Mammary epithelial cell (primary cell): ENCODE measurements at regions of chr14 and their contacts with region 1.

Region 1: GRCh38 chr14:49550286-49551184 is 35.6 kb downstream of the RPS29 start:
- DNase-seq: peak; percentile 21
- H3K4me3 ChIP-seq: no peak overlapping the region
- H3K27ac ChIP-seq: no peak overlapping the region
- H3K4me1 ChIP-seq: peaks cover 8% of the 10 kb centered on the region
- H3K27me3 ChIP-seq: no peaks in the 10 kb centered on the region
- CTCF ChIP-seq: peak; percentile 57 to 59

Region 2: GRCh38 chr14:49306152-49306751 is 244.3 kb before region 1 on chr14:
- CTCF ChIA-PET with region 1: interaction called, 3 read pairs
- dilution Hi-C with region 1: no loop called
- in situ Hi-C with region 1: no loop called
- intact Hi-C with region 1: loop called (anchors 2 kb)
- DNase-seq: peak; percentile 6
- H3K4me3 ChIP-seq: no peak overlapping the region
- H3K27ac ChIP-seq: no peak overlapping the region
- H3K4me1 ChIP-seq: no peaks in the 10 kb centered on the region
- H3K27me3 ChIP-seq: no peaks in the 10 kb centered on the region
- CTCF ChIP-seq: peak; percentile 26 to 39

Region 3: GRCh38 chr14:49461529-49462401 is 88.8 kb before region 1 on chr14:
- CTCF ChIA-PET with region 1: interaction called, 84 read pairs
- dilution Hi-C with region 1: no loop called
- in situ Hi-C with region 1: loop called (anchors 5 kb)
- intact Hi-C with region 1: loop called (anchors 1 kb)
- DNase-seq: peak; percentile 66
- H3K4me3 ChIP-seq: no peak overlapping the region
- H3K27ac ChIP-seq: no peak overlapping the region
- H3K4me1 ChIP-seq: no peaks in the 10 kb centered on the region
- H3K27me3 ChIP-seq: no peaks in the 10 kb centered on the region
- CTCF ChIP-seq: peak; percentile 76 to 77

Region 4: GRCh38 chr14:49497725-49498348 is 52.7 kb before region 1 on chr14:
- CTCF ChIA-PET with region 1: no interaction called
- dilution Hi-C with region 1: no loop called
- in situ Hi-C with region 1: no loop called
- intact Hi-C with region 1: loop called (anchors 1 kb)
- DNase-seq: peak; percentile 64
- H3K4me3 ChIP-seq: no peak overlapping the region
- H3K27ac ChIP-seq: no peak overlapping the region
- H3K4me1 ChIP-seq: no peaks in the 10 kb centered on the region
- H3K27me3 ChIP-seq: no peaks in the 10 kb centered on the region
- CTCF ChIP-seq: peak; percentile 84 to 88

Region 5: DNA sequence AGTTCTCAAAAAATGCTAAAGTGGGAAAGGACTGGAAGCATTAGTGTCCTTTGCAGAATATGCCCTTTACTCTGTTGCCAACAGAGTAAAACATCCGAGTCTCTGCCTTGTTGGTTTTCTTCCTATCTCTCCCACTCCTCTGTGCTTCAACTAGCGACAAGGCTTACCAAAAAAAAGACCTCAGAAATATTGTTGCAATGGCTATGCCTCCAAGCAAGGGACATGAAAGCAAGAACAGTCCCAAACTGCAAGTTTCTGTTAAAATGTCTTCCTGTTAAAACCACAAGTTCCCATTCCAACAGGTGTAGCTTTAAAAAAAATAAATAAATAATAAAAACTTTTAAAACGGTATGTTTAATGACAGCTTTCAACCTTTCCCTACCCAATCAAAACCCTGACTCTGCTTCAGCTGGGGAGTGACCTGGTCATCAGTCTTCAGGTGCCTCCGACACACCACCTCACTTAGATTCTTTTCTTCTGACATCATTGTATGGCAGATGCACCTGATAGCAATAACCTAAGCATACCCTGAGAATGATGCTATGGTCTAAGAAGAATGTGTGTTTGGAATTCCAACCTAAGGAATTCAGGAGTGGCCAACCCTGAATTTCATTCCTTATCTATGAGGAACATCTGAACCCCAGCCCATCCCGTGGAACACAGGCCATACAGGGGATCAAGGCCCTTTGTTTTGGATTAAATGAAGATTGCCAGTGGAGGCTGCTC is 45.3 kb before region 1 on chr14:
- CTCF ChIA-PET with region 1: no interaction called
- dilution Hi-C with region 1: loop called (anchors 5 kb)
- in situ Hi-C with region 1: no loop called
- intact Hi-C with region 1: loop called (anchors 2 kb)
- DNase-seq: peak; percentile 85
- H3K4me3 ChIP-seq: no peak overlapping the region
- H3K27ac ChIP-seq: peak overlapping the region; percentile 63
- H3K4me1 ChIP-seq: peaks cover 21% of the 10 kb centered on the region
- H3K27me3 ChIP-seq: no peaks in the 10 kb centered on the region
- CTCF ChIP-seq: no peak

Region 6: DNA sequence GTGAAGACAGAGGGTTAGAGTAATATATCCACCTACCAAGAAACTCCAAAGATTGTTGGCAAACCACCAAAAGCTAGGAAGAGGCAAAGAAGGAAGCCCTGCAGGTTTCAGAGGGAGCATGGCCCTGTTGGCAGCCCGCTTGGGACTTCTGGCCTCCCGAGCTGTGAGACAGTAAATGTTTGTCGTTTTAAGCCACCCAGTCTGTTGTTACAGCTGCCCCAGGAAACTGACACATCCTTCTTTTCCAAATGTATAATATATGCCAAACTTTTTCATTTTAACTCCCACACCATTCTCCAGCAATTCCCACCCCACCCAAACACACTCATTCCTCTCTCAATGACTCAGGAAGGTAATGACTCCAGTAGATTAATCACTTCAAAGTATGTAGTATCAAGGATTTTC is 38.4 kb before region 1 on chr14:
- CTCF ChIA-PET with region 1: no interaction called
- dilution Hi-C with region 1: loop called (anchors 5 kb)
- in situ Hi-C with region 1: no loop called
- intact Hi-C with region 1: loop called (anchors 2 kb)
- DNase-seq: peak; percentile 94
- H3K4me3 ChIP-seq: no peak overlapping the region
- H3K27ac ChIP-seq: peak overlapping the region; percentile 83
- H3K4me1 ChIP-seq: peaks cover 24% of the 10 kb centered on the region
- H3K27me3 ChIP-seq: no peaks in the 10 kb centered on the region
- CTCF ChIP-seq: no peak